ENCODE measurements at regions of chr17 and their contacts with region 1.

Region 1: GRCh38 chr17:48492401-48493298 is 38.2 kb downstream of the HOXB1 start:
- DNase-seq: peak; percentile 77
- ATAC-seq: peak; percentile 91
- H3K4me3 ChIP-seq: peak overlapping the region; percentile 44
- H3K27ac ChIP-seq: no peak overlapping the region
- H3K4me1 ChIP-seq: peaks cover 58% of the 10 kb centered on the region
- H3K27me3 ChIP-seq: no peaks in the 10 kb centered on the region
- CTCF ChIP-seq: peak; percentile 94

Region 2: DNA sequence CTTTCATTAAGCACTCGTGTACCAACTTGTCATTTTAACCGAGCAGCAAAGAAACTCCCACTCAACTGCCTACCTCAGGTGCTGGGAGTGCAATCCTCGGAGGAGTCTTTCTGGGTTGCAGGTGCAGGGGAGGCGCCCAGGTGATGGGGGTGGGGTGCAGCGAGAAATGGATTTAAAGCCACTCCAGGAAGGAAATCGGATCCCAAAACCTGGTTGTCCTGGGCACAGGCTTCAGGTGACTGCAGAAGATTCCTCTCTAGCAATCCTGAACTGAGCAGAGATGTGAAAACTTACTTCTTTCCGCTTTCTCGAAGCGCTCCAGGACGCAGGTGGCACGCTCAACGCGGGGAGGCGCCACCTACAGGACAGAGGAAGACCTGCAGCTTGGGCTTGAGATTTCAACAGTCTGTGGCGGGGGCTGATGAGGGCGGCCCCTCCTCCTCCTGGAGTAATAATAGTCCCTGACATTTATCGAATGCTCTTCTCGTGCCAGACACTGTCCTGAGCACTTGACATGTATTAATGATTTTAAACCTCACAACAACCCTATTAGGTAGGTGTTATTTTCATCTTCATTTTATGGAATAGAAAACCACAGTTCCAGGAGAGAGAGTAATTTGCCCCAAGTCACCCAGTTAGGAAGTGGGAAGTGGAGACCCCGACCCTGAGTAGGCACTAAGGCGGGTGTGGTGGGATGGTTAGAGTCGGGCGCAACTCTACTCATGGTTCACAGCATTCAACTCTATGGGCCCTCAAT is 35.4 kb before region 1 on chr17:
- CTCF ChIA-PET with region 1: no interaction called
- POLR2A ChIA-PET with region 1: no interaction called
- intact Hi-C with region 1: loop called (anchors 2 kb)
- DNase-seq: peak; percentile 87
- ATAC-seq: peak; percentile 95
- H3K4me3 ChIP-seq: peak overlapping the region; percentile 55
- H3K27ac ChIP-seq: no peak overlapping the region
- H3K4me1 ChIP-seq: peaks cover 9% of the 10 kb centered on the region
- H3K27me3 ChIP-seq: no peaks in the 10 kb centered on the region
- CTCF ChIP-seq: peak; percentile 100

Region 3: DNA sequence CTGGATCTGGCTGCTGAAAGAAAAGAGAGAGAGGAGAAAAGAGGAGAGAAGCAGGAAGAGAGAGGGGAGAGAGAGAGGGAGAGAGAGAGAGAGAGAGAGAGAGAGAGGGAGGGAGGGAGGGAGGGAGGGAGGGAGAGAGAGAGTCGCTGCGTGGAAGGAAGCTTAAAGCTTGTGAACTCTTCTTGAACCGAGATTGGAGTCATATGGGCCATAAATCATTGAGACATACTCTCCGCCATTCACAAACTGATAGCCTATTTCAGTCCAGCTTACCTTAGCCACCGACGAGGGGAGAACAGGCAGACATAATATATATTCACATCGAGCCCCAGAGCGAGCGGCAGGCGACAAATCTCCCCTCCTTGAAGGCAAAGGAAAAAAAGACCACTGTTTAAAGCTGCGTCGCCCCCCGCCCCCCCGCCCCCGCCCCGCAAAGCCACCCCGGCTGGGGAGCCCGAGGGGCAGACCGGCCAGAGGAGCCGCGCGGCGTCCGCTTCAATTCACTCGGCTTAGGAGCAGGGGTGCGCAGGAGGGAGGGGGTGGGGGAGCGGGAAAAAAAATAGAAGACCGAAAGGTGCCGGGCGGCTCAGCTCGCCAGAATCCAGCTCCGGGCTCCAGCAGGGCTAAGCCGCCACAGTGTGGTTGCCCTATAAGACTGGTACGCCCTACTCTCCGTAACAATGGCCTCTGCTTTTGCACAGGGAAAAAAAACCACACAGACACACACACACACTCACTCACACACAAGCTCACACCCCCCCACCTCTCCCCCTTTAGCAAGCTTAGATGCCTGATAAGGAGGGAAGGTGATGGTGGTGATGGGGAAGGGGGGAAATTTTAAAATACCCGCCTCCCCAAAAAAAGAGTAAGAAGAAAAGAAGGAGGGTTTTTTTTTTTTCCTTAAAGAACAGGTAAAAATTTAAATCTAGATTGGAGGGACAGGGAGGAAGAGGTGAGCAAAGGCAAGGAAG is 62.9 kb after region 1 on chr17:
- CTCF ChIA-PET with region 1: no interaction called
- POLR2A ChIA-PET with region 1: no interaction called
- intact Hi-C with region 1: loop called (anchors 5 kb)
- DNase-seq: peak; percentile 72
- ATAC-seq: peak; percentile 72
- H3K4me3 ChIP-seq: peak overlapping the region; percentile 67
- H3K27ac ChIP-seq: peak overlapping the region; percentile 35; the same call in 1 of the 2 replicates
- H3K4me1 ChIP-seq: peaks cover 25% of the 10 kb centered on the region
- H3K27me3 ChIP-seq: no peaks in the 10 kb centered on the region
- CTCF ChIP-seq: no peak

Region 4: GRCh38 chr17:48636177-48637018 is 143.7 kb after region 1 on chr17:
- CTCF ChIA-PET with region 1: no interaction called
- POLR2A ChIA-PET with region 1: no interaction called
- intact Hi-C with region 1: no loop called
- DNase-seq: peak; percentile 84
- ATAC-seq: peak; percentile 85
- H3K4me3 ChIP-seq: peak overlapping the region; percentile 25; the same call in 1 of the 2 replicates
- H3K27ac ChIP-seq: no peak overlapping the region
- H3K4me1 ChIP-seq: peaks cover 13% of the 10 kb centered on the region; the same call in 1 of the 2 replicates
- H3K27me3 ChIP-seq: peaks cover 9% of the 10 kb centered on the region
- CTCF ChIP-seq: peak; percentile 81